Activated CD4-positive, alpha-beta memory T cell treated with anti-CD3 and anti-CD28 coated beads for 36 hours (primary cell): ENCODE measurements at regions of chr9 and their contacts with region 1.

Region 1: DNA sequence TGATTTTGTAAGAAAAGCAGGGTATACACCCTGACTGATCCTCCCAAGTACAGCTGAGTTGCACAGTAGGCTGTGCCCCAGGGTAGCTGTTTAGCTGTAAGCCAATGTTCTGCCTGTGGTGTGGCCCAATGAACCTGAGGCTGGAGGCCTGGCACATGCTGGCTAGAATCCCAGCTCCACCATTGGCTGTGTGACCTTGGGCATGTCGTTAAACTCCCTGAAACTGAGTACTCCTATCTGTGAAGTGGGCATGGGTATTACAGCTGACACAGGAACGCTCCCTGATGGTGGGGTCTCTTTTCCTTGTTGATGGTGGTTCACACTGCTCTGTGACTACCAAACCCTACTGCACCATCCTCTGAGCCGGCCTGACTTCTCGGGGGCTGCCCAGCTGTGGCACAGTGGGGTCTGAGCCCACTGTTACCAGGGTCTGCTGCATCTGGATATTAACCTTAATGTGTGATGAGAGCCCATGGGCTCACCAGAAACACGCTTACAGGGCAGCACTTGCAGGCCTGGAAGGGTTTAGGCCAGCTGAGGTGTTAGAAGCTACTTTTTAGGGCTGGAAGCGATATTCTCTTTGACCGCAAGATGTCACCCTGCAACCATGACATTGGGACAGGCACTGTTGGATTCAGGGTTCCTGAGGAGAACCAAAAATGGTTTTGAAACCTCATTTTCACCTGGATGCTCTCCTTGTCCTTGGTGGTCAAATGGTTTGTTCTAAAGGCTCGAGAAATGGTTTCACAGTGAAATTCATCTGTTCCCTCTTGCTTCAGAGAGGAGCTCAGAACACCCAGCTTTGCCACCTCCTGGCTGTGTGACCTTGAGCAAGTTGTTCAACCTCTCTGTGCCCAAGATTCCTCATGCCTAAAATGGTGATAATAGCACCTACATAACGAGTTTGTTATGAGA is 6.8 kb upstream of the GADD45G start:
- DNase-seq: peak; percentile 68
- H3K4me3 Mint-ChIP-seq: no peak overlapping the region
- H3K27ac Mint-ChIP-seq: no peak overlapping the region
- H3K4me1 Mint-ChIP-seq: peaks cover 2% of the 10 kb centered on the region
- H3K27me3 Mint-ChIP-seq: peaks cover 10% of the 10 kb centered on the region

Region 2: GRCh38 chr9:89576404-89576839 is 21.5 kb before region 1 on chr9:
- CTCF ChIA-PET with region 1: interaction called, 22 read pairs
- POLR2A ChIA-PET with region 1: no interaction called
- intact Hi-C with region 1: no loop called
- DNase-seq: no peak
- H3K4me3 Mint-ChIP-seq: no peak overlapping the region
- H3K27ac Mint-ChIP-seq: no peak overlapping the region
- H3K4me1 Mint-ChIP-seq: peaks cover 8% of the 10 kb centered on the region
- H3K27me3 Mint-ChIP-seq: peaks cover 29% of the 10 kb centered on the region

Region 3: DNA sequence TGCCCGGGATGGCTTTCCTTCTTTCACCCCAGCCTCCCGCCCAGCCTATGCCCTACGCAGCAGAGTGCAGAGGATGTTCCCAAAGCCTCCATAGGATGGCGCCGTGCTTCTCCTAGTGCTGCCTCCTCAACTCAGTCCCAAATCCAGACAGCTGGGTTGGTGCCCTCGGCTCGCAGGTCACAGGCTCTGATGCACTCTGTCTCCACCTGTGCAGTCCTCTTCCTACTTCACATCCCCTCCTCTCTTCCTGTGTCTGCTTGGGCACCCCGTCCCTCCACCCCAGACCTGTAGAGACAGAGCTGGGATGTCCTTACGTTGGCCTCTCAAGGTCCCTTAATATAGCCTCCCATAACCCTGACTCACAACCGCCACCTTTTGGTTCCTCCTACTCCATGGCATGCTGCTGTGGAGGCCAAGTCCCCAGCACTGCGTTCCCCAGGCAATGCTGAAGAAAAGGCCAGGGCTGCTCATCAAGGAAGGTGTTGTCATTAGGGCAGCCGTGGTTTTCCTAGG is 321.3 kb after region 1 on chr9:
- CTCF ChIA-PET with region 1: interaction called, 19 read pairs
- POLR2A ChIA-PET with region 1: no interaction called
- intact Hi-C with region 1: loop called (anchors 1 kb)
- DNase-seq: peak; percentile 71
- H3K4me3 Mint-ChIP-seq: no peak overlapping the region
- H3K27ac Mint-ChIP-seq: peak overlapping the region; percentile 4
- H3K4me1 Mint-ChIP-seq: peaks cover 15% of the 10 kb centered on the region
- H3K27me3 Mint-ChIP-seq: no peaks in the 10 kb centered on the region

Region 4: GRCh38 chr9:90102292-90102901 is 504.4 kb after region 1 on chr9:
- CTCF ChIA-PET with region 1: interaction called, 258 read pairs
- POLR2A ChIA-PET with region 1: interaction called, 6 read pairs
- intact Hi-C with region 1: loop called (anchors 1 kb)
- DNase-seq: peak; percentile 87
- H3K4me3 Mint-ChIP-seq: no peak overlapping the region
- H3K27ac Mint-ChIP-seq: no peak overlapping the region
- H3K4me1 Mint-ChIP-seq: peaks cover 2% of the 10 kb centered on the region
- H3K27me3 Mint-ChIP-seq: peaks cover 7% of the 10 kb centered on the region

Region 5: GRCh38 chr9:90870621-90871326 is 1272.8 kb after region 1 on chr9:
- CTCF ChIA-PET with region 1: interaction called, 9 read pairs
- POLR2A ChIA-PET with region 1: no interaction called
- intact Hi-C with region 1: loop called (anchors 5 kb)
- DNase-seq: peak; percentile 41
- H3K4me3 Mint-ChIP-seq: no peak overlapping the region
- H3K27ac Mint-ChIP-seq: no peak overlapping the region
- H3K4me1 Mint-ChIP-seq: no peaks in the 10 kb centered on the region
- H3K27me3 Mint-ChIP-seq: peaks cover 9% of the 10 kb centered on the region